GM12878 (cell line): ENCODE measurements at regions of chr11 and their contacts with region 1.

Region 1: DNA sequence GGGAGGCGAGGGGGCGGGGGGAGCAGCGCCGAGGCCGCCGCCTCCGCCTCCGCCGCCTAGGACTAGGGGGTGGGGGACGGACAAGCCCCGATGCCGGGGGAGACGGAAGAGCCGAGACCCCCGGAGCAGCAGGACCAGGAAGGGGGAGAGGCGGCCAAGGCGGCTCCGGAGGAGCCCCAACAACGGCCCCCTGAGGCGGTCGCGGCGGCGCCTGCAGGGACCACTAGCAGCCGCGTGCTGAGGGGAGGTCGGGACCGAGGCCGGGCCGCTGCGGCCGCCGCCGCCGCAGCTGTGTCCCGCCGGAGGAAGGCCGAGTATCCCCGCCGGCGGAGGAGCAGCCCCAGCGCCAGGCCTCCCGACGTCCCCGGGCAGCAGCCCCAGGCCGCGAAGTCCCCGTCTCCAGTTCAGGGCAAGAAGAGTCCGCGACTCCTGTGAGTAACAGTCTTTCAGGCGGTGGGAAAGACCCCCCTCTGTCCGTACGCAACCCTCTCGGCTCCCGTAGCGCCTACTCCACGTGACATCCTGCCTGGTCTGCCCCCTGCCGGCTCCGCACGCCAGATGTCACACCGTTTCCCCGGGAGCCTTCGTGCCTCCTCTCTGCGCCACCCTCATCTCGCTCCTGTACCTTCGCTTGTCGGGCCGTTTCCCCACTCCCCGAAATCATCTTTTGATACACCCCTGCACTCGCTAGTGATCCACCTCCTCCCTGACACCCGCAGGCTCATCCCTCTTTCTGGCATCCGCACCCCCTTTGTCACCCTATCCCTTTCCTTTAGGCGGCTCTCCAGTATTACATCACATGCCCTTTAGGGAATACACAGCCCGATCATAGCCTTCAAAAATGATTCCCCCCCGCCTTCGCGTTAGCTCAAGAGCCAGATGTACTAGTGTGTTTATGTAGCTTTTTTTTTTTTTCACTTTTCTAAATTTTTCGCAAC is 598 bp downstream of the ZFP91 start:
- DNase-seq: no peak
- ATAC-seq: peak; percentile 52
- H3K4me3 ChIP-seq: peak overlapping the region; percentile 82
- H3K27ac ChIP-seq: peak overlapping the region; percentile 98
- H3K4me1 ChIP-seq: peaks cover 12% of the 10 kb centered on the region
- H3K27me3 ChIP-seq: no peaks in the 10 kb centered on the region
- CTCF ChIP-seq: peak; percentile 78 to 86 (median 84)
- EP300 ChIP-seq: peak in 1 of 2 experiments; percentile 55; a peak in 1 of 4 replicates
- POLR2A ChIP-seq: peak; percentile 79
- RAD21 ChIP-seq: peak; percentile 24; the same call in 1 of the 2 replicates

Region 2: GRCh38 chr11:57324886-57325734 is 1254.4 kb before region 1 on chr11 and contains the start of gene TNKS1BP1:
- CTCF ChIA-PET with region 1: no interaction called
- POLR2A ChIA-PET with region 1: no interaction called
- RAD21 ChIA-PET with region 1: no interaction called
- SMC1A ChIA-PET with region 1: no interaction called
- in situ Hi-C with region 1: loop called (anchors 25 kb)
- intact Hi-C with region 1: no loop called
- DNase-seq: peak; percentile 56
- ATAC-seq: peak; percentile 87
- H3K4me3 ChIP-seq: peak within 1 kb of the TSS; percentile 51
- H3K27ac ChIP-seq: peak within 1 kb of the TSS; percentile 81
- H3K4me1 ChIP-seq: peaks cover 22% of the 10 kb centered on the region
- H3K27me3 ChIP-seq: no peaks in the 10 kb centered on the region
- CTCF ChIP-seq: no peak
- EP300 ChIP-seq: no peak
- POLR2A ChIP-seq: peak; percentile 90
- RAD21 ChIP-seq: no peak
- polyA plus RNA-seq, gene TNKS1BP1: 0.26 to 0.47 TPM

Region 3: GRCh38 chr11:58609723-58610122 is 30.3 kb after region 1 on chr11:
- CTCF ChIA-PET with region 1: interaction called, 6 read pairs
- POLR2A ChIA-PET with region 1: no interaction called
- RAD21 ChIA-PET with region 1: interaction called, 13 read pairs
- SMC1A ChIA-PET with region 1: interaction called, 12 read pairs
- in situ Hi-C with region 1: no loop called
- intact Hi-C with region 1: no loop called
- DNase-seq: no peak
- ATAC-seq: peak; percentile 40
- H3K4me3 ChIP-seq: no peak overlapping the region
- H3K27ac ChIP-seq: no peak overlapping the region
- H3K4me1 ChIP-seq: peaks cover 9% of the 10 kb centered on the region
- H3K27me3 ChIP-seq: no peaks in the 10 kb centered on the region
- CTCF ChIP-seq: no peak
- EP300 ChIP-seq: no peak
- POLR2A ChIP-seq: no peak
- RAD21 ChIP-seq: no peak

Region 4: GRCh38 chr11:58654079-58654907 is 74.8 kb after region 1 on chr11:
- CTCF ChIA-PET with region 1: interaction called, 14 read pairs
- POLR2A ChIA-PET with region 1: interaction called, 4 read pairs
- RAD21 ChIA-PET with region 1: interaction called, 3 read pairs
- SMC1A ChIA-PET with region 1: interaction called, 8 read pairs
- in situ Hi-C with region 1: no loop called
- intact Hi-C with region 1: no loop called
- DNase-seq: peak; percentile 38
- ATAC-seq: peak; percentile 98
- H3K4me3 ChIP-seq: no peak overlapping the region
- H3K27ac ChIP-seq: no peak overlapping the region
- H3K4me1 ChIP-seq: peaks cover 4% of the 10 kb centered on the region; the same call in 1 of the 2 replicates
- H3K27me3 ChIP-seq: no peaks in the 10 kb centered on the region
- CTCF ChIP-seq: peak; percentile 89 to 90 (median 89)
- EP300 ChIP-seq: no peak
- POLR2A ChIP-seq: no peak
- RAD21 ChIP-seq: peak; percentile 76

Region 5: DNA sequence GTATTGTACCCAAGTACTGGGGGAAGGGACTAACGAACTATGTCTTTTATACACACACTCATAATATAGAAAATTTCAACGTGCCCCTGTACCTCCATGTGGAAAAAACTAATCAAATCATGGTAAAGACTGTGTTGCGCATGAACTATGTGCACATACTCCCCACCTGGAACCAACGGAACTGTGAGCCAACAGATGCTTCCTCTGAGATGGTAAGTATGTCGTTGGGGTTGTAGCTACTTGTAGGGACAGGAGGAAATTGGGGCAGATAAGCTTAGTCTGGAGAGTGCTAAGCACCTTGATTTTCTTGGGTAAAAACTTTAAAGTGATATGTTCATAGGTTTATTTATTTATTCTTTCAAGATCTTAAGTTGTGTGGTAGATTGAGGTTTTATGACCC is 112.2 kb after region 1 on chr11:
- CTCF ChIA-PET with region 1: no interaction called
- POLR2A ChIA-PET with region 1: no interaction called
- RAD21 ChIA-PET with region 1: no interaction called
- SMC1A ChIA-PET with region 1: no interaction called
- in situ Hi-C with region 1: no loop called
- intact Hi-C with region 1: no loop called
- DNase-seq: no peak
- ATAC-seq: no peak
- H3K4me3 ChIP-seq: no peak overlapping the region
- H3K27ac ChIP-seq: no peak overlapping the region
- H3K4me1 ChIP-seq: no peaks in the 10 kb centered on the region
- H3K27me3 ChIP-seq: no peaks in the 10 kb centered on the region; a peak in 2 of 4 replicates
- CTCF ChIP-seq: no peak
- EP300 ChIP-seq: no peak
- POLR2A ChIP-seq: no peak
- RAD21 ChIP-seq: no peak

Region 6: DNA sequence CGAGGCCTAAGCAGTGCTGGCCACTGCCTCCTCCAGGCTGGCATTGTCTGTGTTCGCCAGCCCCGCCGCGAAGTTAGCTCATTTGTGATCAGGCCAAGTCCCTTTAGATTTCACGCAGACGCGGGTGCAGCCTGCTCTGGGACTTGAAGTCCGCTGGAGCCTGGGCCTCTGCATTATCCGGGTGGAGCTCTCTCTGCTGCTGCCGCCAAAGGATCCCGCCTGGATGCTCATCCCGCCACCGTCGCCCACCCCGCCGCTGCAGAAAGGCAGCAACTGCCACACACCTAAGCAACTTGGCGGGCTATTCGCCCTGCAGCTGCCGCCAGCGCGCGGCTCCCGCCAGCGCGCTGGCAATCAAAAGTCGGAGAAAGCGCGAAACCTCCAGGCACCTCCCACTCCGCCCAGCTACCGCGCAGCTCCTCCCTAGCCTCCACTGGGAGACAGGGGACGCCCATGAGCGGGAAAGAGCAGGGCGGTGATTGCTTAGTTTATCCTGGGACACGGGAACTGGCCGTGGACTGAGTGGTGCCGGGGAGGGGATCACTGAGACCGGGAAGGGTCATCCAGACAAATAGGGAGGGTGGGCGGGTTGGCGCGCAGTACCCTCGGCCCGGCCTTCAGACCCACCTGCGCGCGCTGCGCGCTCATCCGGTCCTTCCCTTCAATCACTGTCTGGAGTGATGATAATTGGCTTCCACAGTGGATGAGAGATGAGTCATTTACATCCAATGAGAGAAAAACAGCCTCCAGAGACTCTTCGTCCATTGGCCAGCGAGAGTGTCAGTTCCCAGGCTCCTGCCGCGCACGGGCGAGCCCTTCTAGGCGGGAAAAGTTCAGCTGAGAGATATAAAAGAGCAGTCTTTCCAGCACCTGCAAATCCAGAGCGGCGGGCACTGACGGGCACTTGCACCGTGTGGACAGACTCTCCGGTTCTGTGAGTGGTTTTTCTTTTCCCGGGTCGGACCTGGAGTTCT is 527.2 kb after region 1 on chr11 and contains the start of gene FAM111B:
- CTCF ChIA-PET with region 1: no interaction called
- POLR2A ChIA-PET with region 1: interaction called, 4 read pairs
- RAD21 ChIA-PET with region 1: no interaction called
- SMC1A ChIA-PET with region 1: no interaction called
- in situ Hi-C with region 1: loop called (anchors 10 kb)
- intact Hi-C with region 1: loop called (anchors 2 kb)
- DNase-seq: peak; percentile 84
- ATAC-seq: peak; percentile 85
- H3K4me3 ChIP-seq: peak within 1 kb of the TSS; percentile 79
- H3K27ac ChIP-seq: peak within 1 kb of the TSS; percentile 89
- H3K4me1 ChIP-seq: peaks cover 7% of the 10 kb centered on the region
- H3K27me3 ChIP-seq: no peaks in the 10 kb centered on the region
- CTCF ChIP-seq: no peak
- EP300 ChIP-seq: no peak
- POLR2A ChIP-seq: peak; percentile 79
- RAD21 ChIP-seq: no peak
- polyA plus RNA-seq, gene FAM111B: 42.0 to 65.3 TPM

Region 7: DNA sequence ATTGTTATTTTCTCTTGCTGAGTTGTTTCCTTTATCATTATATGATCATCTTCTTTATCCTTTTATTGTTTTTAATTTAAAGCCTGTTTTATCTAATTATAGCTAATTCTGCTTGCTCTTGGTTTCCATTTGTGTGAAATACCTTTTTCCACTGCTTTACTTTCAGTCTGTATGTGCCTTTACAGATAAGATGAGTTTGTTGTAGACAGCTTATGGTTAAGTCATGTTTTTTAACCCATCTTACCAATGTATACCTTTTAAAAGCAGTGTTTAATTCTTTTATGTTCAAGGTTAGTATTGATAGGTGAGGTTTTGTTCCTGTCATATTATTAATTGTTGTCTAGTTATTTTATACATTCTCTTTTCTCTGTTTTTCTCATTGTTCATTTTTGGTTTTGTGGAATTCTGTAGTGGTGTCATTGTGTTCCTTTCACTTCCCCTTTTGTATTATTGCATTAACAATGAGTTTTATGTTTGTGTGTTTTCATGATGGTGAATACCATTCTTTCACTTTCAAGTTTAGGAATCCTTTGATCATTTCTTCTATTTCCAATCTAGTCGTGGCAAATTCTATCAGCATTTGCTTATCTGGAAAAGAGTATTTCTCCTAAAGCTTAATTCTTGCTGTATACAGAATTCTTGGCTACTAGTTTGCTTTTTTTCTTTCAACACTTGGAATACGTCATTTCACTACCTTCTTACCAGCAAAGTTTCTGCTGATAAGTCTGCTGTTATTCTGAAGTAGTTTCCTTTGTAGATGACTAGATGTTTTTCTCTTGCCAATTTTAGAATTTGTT is 801.0 kb after region 1 on chr11:
- CTCF ChIA-PET with region 1: no interaction called
- POLR2A ChIA-PET with region 1: no interaction called
- RAD21 ChIA-PET with region 1: no interaction called
- SMC1A ChIA-PET with region 1: no interaction called
- in situ Hi-C with region 1: no loop called
- intact Hi-C with region 1: loop called (anchors 10 kb)
- DNase-seq: peak; percentile 60
- ATAC-seq: peak; percentile 96
- H3K4me3 ChIP-seq: peak overlapping the region; percentile 43; the same call in 1 of the 2 replicates
- H3K27ac ChIP-seq: peak overlapping the region; percentile 67
- H3K4me1 ChIP-seq: peaks cover 5% of the 10 kb centered on the region
- H3K27me3 ChIP-seq: no peaks in the 10 kb centered on the region
- CTCF ChIP-seq: no peak
- EP300 ChIP-seq: peak; percentile 79 to 93
- POLR2A ChIP-seq: no peak
- RAD21 ChIP-seq: no peak